ENCODE measurements at regions of chr6 and their contacts with region 1.

Region 1: DNA sequence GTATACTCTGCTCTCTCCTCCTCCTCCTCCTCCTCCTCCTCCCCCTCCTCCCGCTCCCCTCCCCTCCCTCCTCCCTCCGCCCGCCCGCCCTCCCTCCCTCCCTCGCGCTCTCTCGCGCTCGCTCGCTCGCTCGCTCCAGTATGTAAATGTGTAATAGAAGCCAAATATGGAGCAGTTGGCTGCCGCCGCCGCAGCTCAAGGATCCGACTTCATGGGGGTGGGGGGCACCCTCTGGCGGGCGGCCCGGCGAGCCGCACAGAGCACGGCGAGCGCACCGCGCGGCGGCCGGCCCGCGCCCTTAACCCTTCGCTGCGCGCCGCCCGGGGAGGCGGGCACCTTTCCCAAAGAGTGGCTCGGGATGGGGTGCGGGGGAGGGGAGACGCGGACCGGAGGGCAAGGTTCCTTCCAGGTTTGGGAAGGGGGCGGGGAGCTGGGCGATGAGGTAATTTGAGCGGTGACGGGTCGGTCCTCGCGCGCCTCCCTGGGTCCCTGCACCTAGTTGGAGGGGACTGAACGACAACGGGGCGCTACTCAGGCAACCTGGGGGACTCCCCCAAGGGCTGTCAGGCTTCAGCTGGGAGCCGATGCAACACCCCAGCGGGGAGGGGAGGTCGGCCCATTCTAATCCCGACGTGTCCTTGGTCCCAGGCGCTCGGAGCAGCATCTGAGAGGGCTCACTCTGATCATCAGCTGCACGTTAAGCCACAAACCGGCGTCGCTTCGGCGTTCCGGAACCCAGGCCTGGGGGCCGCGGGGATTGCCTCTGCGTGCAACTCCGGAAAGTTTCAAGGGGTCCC is 409 bp upstream of the ATXN1 start:
- H3K4me3 ChIP-seq: peak overlapping the region; percentile 76
- H3K27ac ChIP-seq: peak overlapping the region; percentile 100
- H3K4me1 ChIP-seq: peaks cover 43% of the 10 kb centered on the region
- CTCF ChIP-seq: peak; percentile 65; the same call in 1 of the 2 replicates

Region 2: DNA sequence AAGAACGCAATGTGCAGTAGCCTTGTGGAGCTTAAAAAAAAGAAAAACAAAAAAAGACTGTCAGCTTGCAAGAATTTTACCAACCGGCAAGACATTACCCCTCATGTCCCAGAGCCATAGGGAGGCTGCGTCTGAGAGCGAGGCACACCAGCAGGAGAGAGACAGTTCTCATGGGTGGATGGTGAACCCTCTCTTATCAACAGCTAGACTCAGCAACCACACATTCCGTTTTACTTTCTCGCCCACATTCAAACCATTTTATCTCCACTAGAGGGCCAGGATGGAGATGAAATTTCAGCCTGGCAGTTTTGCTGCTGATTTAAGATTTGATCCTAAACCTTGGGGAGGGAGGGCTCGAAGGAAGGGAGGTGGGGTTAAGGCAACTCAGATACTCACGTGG is 247.4 kb before region 1 on chr6:
- CTCF ChIA-PET with region 1: interaction called, 63 read pairs
- POLR2A ChIA-PET with region 1: interaction called, 7 read pairs
- H3K4me3 ChIP-seq: no peak overlapping the region
- H3K27ac ChIP-seq: no peak overlapping the region
- H3K4me1 ChIP-seq: peaks cover 19% of the 10 kb centered on the region
- CTCF ChIP-seq: peak; percentile 29; the same call in 1 of the 2 replicates

Region 3: DNA sequence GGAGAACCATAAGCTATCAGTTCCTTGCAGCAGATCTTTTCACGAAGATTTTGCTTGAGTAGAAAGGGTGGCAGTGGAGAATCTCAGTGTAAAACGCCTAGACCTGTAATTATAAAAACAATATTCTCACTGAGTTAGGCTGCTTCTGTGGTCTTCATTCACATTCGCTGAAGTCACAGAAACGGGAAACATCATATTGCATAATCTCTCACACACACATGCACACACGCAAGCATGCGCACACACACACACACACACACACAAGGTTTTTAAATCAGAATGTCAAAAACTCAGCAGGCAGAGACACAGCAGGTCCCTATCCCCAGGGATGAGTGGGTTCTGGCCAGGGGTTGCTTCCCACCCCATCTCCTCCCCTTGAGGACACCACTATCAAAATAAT is 175.9 kb before region 1 on chr6:
- CTCF ChIA-PET with region 1: no interaction called
- POLR2A ChIA-PET with region 1: no interaction called
- H3K4me3 ChIP-seq: no peak overlapping the region
- H3K27ac ChIP-seq: no peak overlapping the region
- H3K4me1 ChIP-seq: no peaks in the 10 kb centered on the region
- CTCF ChIP-seq: no peak

Region 4: DNA sequence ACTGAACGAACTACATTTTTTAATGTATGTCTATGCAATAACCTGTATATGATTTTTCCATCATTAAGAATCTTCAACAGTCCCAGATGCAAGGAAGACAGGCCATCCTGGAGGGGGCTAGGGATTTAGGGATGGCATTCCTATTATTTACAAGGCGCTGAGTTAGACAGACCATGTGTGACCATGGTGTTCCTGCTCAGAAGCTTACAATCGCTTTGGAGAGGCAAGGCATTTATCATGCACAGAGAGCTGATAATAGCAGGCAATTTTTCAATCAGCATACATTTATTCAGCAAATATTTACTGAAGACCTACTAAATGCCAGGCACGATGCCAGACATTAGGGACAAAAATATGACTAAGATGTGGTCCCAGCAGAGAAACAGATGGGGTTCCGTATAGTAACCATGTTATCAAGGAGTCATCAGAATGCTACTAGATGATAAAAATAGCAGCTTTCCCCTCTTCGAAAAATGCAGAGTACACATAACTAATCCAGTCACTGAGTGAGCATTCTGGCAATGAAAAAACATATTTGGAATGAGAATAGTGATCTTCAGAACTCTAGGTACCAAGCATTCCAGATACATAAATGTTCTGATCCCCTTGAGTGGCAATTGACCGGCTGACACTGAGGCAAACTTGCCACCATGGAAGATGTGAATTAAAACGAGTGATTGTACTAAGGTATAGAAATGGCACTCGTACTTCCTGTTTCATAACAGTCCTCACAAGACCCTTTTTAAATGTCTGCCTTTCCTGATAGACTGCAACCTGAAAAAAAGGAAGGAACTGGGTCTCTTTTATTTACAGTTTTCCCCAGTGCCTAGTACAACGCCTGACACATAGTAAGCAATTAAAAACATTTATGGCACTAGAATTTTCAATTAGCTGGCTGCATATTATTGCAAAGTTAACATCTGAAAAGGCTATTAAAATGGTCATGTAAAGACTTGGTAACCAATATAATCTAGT is 136.1 kb before region 1 on chr6:
- CTCF ChIA-PET with region 1: no interaction called
- POLR2A ChIA-PET with region 1: no interaction called
- H3K4me3 ChIP-seq: no peak overlapping the region
- H3K27ac ChIP-seq: no peak overlapping the region
- H3K4me1 ChIP-seq: peaks cover 13% of the 10 kb centered on the region
- CTCF ChIP-seq: no peak

Region 5: GRCh38 chr6:16723826-16724225 is 37.8 kb before region 1 on chr6:
- CTCF ChIA-PET with region 1: interaction called, 66 read pairs
- POLR2A ChIA-PET with region 1: interaction called, 17 read pairs
- H3K4me3 ChIP-seq: no peak overlapping the region
- H3K27ac ChIP-seq: peak overlapping the region; percentile 74
- H3K4me1 ChIP-seq: peaks cover 70% of the 10 kb centered on the region
- CTCF ChIP-seq: no peak

Region 6: GRCh38 chr6:16781348-16782169 is 19.9 kb after region 1 on chr6:
- CTCF ChIA-PET with region 1: interaction called, 16 read pairs
- POLR2A ChIA-PET with region 1: interaction called, 3 read pairs
- H3K4me3 ChIP-seq: no peak overlapping the region
- H3K27ac ChIP-seq: no peak overlapping the region
- H3K4me1 ChIP-seq: 0 out of 2 replicates have a peak, but pooled peaks cover 5% of the 10 kb centered on the region
- CTCF ChIP-seq: no peak

Region 7: GRCh38 chr6:16964553-16965501 is 203.2 kb after region 1 on chr6:
- CTCF ChIA-PET with region 1: interaction called, 94 read pairs
- POLR2A ChIA-PET with region 1: interaction called, 5 read pairs
- H3K4me3 ChIP-seq: no peak overlapping the region
- H3K27ac ChIP-seq: no peak overlapping the region
- H3K4me1 ChIP-seq: no peaks in the 10 kb centered on the region
- CTCF ChIP-seq: peak; percentile 93

Region 8: GRCh38 chr6:17086469-17086868 is 324.8 kb after region 1 on chr6:
- CTCF ChIA-PET with region 1: interaction called, 42 read pairs
- POLR2A ChIA-PET with region 1: interaction called, 6 read pairs
- H3K4me3 ChIP-seq: no peak overlapping the region
- H3K27ac ChIP-seq: no peak overlapping the region
- H3K4me1 ChIP-seq: no peaks in the 10 kb centered on the region; the same call in 1 of the 2 replicates
- CTCF ChIP-seq: peak; percentile 55; the same call in 1 of the 2 replicates

Region 9: DNA sequence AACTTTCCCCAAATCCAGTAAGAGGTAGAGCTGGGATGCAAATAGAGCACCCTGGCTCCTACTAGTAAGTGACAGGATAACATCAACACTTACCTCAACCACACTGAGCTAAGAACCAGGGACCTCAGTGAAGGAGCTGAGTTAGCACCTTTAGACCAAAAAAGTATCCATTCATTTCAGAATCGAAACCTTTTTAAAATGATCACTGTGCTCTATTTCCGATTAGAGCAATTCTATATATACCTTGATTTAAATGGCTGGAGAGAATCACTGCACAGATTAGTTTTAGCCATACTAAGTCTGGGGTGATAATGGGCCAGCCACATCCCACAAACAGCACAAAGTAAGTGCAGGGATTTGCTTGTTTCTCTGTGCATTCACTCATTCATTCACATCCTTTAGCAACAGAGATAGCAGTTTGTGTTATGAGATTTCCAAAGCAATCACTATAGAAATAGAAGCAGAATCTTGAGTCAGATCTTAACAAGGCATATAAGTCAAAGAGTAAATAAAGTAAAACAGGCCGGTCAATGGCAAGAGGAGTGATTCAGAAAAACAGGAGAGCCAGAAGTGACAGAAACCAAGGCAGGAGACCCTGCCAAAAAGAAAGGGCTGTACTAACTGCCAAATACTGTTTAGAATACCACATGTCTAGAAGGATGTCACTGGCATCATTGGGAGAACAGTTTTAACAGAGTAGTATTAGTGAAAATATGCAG is 1089.5 kb after region 1 on chr6:
- CTCF ChIA-PET with region 1: no interaction called
- POLR2A ChIA-PET with region 1: no interaction called
- H3K4me3 ChIP-seq: no peak overlapping the region
- H3K27ac ChIP-seq: no peak overlapping the region
- H3K4me1 ChIP-seq: 0 out of 2 replicates have a peak, but pooled peaks cover 3% of the 10 kb centered on the region
- CTCF ChIP-seq: no peak